ENCODE measurements at regions of chr1 and their contacts with region 1.

Region 1: GRCh38 chr1:239682960-239683359 is 296.6 kb downstream of the CHRM3 start:
- DNase-seq: no peak
- H3K4me3 ChIP-seq: no peak overlapping the region
- H3K27ac ChIP-seq: no peak overlapping the region
- H3K4me1 ChIP-seq: no peaks in the 10 kb centered on the region
- H3K27me3 ChIP-seq: no peaks in the 10 kb centered on the region
- CTCF ChIP-seq: no peak
- POLR2A ChIP-seq: no peak

Region 2: GRCh38 chr1:239700667-239701066 is 17.7 kb after region 1 on chr1:
- CTCF ChIA-PET with region 1: no interaction called
- POLR2A ChIA-PET with region 1: no interaction called
- dilution Hi-C with region 1: no loop called
- intact Hi-C with region 1: loop called (anchors 1 kb)
- DNase-seq: no peak
- H3K4me3 ChIP-seq: no peak overlapping the region
- H3K27ac ChIP-seq: no peak overlapping the region
- H3K4me1 ChIP-seq: no peaks in the 10 kb centered on the region
- H3K27me3 ChIP-seq: no peaks in the 10 kb centered on the region
- CTCF ChIP-seq: no peak
- POLR2A ChIP-seq: no peak